ENCODE measurements at regions of chr1 and their contacts with region 1.

Region 1: GRCh38 chr1:154220071-154220969 is at the start of gene UBAP2L:
- DNase-seq: peak; percentile 99
- H3K4me3 Mint-ChIP-seq: peak within 1 kb of the TSS; percentile 93
- H3K27ac Mint-ChIP-seq: peak within 1 kb of the TSS; percentile 97
- H3K4me1 Mint-ChIP-seq: peaks cover 55% of the 10 kb centered on the region
- H3K27me3 Mint-ChIP-seq: no peaks in the 10 kb centered on the region
- total RNA-seq, gene UBAP2L: 259 and 263 TPM in 2 replicates

Region 2: DNA sequence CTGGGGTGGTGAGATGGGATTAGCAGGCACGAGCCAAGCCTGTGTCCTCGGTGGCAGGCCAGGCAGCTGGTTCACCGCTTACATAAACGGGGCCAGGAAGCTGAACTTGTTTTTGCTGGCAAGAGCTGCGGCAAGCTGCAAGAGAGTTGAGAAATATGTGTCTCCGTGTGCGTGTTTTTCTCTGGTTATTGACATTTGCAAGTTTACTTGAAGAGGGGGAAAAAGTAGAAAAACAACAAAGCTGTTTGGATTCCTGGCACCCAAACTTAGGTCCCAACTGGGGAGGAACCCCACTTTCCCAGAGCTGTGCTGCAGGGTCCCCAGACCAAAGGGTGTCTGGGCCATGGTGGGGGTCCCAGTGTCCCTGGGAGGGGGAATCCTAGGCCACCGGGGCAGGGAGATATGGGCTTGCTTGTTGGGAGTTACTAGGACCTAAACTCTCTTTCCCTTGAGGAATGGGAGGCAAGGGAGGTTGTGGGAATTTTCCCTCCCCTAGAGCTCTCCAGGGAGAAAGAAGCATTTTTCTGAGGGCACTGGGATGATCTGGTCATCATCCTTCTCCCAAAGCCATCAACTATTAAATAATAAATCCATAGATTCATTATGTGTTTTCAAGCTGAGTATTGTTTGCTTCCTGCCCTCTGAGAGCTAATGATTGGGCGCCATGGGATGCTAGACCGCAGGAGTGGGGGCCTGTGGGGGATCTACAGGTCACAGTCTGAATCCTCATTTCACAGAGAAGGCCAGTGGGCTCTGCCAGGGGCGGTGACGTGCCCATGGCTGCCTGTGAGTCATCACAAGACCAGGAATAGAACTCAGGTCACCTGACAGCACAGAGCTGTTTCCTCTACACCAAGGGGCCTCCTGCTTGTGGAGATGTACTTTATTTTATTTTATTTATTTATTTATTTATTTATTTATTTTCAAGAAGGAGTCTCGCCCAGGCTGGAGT is 199.6 kb after region 1 on chr1:
- intact Hi-C with region 1: no loop called
- DNase-seq: no peak
- H3K4me3 Mint-ChIP-seq: no peak overlapping the region
- H3K27ac Mint-ChIP-seq: peak overlapping the region; percentile 29
- H3K4me1 Mint-ChIP-seq: peaks cover 23% of the 10 kb centered on the region
- H3K27me3 Mint-ChIP-seq: no peaks in the 10 kb centered on the region

Region 3: DNA sequence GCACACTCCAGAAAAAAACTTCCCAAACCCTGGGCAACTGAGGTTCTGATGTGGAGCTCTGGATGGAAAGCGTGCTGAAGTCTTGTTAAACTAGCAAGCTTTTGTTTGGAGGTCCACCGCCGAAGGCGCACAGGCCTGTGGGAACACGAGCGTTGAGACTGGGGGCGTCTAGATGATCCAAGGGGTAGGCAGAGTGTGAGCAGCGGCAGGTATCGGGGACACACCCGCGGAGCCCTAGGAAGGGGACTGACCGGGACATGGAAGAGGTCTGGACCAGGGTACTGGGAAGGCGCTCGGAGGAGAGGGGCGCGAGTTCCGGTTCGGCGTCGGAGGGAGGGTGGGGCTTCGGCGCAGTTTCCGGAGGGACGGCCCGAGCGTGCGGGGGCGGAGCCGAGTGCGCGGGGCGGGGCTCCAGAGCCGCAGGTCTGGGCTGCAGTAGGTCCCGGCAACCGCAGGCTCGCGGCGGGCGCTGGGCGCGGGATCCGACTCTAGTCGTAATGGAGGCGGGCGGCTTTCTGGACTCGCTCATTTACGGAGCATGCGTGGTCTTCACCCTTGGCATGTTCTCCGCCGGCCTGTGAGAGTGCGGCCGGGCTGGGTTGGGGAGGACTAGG is 915.2 kb after region 1 on chr1 and contains the start of gene SLC50A1:
- intact Hi-C with region 1: loop called (anchors 5 kb)
- DNase-seq: peak; percentile 92
- H3K4me3 Mint-ChIP-seq: peak within 1 kb of the TSS; percentile 91
- H3K27ac Mint-ChIP-seq: peak within 1 kb of the TSS; percentile 97
- H3K4me1 Mint-ChIP-seq: peaks cover 32% of the 10 kb centered on the region
- H3K27me3 Mint-ChIP-seq: peaks cover 2% of the 10 kb centered on the region
- total RNA-seq, gene SLC50A1: 56.9 and 58.0 TPM in 2 replicates